ENCODE measurements at regions of chr2 and their contacts with region 1.

Region 1: DNA sequence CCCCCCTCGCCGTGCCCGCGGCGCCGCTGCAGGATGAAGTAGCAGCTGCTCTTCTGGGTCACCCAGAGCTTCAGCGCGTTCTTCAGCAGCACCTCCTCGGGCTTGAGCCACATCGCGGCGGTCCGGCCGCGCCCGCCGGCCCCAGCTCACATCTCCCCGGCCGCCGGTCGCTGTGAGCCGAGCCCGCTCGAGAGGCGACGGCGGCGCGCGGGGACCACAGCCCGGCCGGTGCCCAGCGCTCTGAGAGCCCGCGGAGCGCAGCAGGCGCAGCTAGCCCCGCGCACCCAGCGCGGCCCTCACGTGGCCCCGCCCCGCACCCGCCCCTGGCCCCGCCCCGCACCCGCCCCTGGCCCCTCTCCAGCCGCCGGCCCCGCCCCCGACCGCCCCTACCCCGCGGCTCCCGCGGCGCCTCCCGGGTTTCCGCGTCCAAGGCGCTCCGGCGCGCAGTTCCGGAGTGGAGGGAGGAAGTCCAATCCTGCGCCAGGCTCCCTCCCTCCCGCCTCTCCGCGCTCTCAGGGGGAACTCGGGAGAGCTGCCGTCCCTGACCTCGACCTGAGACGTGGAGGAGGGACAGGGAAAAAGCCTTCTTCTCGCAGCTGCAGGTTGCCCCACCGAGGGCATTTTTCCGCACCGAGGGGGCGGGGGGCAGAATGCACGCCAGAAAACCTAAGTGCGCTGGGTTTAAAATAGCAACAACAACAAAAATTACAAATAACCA is at the start of gene TBC1D8:
- DNase-seq: peak; percentile 89 to 97 (median 94)
- ATAC-seq: peak; percentile 83 to 86 (median 84)
- H3K4me3 ChIP-seq: peak within 1 kb of the TSS; percentile 77 to 93 (median 86)
- H3K27ac ChIP-seq: peak within 1 kb of the TSS; percentile 72 to 88 (median 80)
- H3K4me1 ChIP-seq: peaks cover 16 to 37% (median 33%) of the 10 kb centered on the region in 3 donors
- H3K27me3 ChIP-seq: no peaks in the 10 kb centered on the region
- CTCF ChIP-seq: no peak
- total RNA-seq, gene TBC1D8: 21.3 to 43.2 (median 31.1) TPM

Region 2: DNA sequence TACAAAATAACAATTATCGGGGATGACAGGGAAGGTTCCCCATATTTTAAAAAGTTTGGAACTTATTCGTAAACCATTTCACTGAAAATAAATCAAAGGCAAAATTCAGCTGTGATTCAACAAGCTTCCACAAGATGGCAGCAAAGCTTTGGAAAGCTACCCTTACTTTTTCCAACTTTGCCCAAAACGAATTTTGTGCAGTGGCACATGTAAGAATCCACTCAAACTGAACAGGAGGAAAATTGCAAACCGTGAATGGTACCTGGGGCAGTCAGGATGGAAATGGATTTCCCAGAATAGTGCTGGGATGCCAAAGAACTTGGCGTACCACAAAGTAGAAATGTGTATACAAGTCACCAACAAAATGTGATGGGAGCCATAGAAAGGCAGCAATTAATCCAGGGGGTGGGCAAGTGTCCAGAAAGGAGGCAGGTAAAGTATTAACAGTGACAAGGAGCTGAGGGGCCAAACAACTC is 138.6 kb before region 1 on chr2:
- intact Hi-C with region 1: loop called in 1 of 3 experiments (anchors 5 kb)
- DNase-seq: peak in 1 of 6 donors; percentile 55
- ATAC-seq: peak; percentile 26 to 76 (median 62)
- H3K4me3 ChIP-seq: no peak overlapping the region
- H3K27ac ChIP-seq: no peak overlapping the region
- H3K4me1 ChIP-seq: no peaks in the 10 kb centered on the region
- H3K27me3 ChIP-seq: no peaks in the 10 kb centered on the region
- CTCF ChIP-seq: peak; percentile 45 to 77 (median 68)

Region 3: GRCh38 chr2:101022221-101022620 is 129.1 kb before region 1 on chr2:
- intact Hi-C with region 1: loop called in 1 of 3 experiments (anchors 5 kb)
- DNase-seq: no peak
- ATAC-seq: no peak
- H3K4me3 ChIP-seq: no peak overlapping the region
- H3K27ac ChIP-seq: no peak overlapping the region
- H3K4me1 ChIP-seq: no peaks in the 10 kb centered on the region
- H3K27me3 ChIP-seq: no peaks in the 10 kb centered on the region
- CTCF ChIP-seq: no peak

Region 4: DNA sequence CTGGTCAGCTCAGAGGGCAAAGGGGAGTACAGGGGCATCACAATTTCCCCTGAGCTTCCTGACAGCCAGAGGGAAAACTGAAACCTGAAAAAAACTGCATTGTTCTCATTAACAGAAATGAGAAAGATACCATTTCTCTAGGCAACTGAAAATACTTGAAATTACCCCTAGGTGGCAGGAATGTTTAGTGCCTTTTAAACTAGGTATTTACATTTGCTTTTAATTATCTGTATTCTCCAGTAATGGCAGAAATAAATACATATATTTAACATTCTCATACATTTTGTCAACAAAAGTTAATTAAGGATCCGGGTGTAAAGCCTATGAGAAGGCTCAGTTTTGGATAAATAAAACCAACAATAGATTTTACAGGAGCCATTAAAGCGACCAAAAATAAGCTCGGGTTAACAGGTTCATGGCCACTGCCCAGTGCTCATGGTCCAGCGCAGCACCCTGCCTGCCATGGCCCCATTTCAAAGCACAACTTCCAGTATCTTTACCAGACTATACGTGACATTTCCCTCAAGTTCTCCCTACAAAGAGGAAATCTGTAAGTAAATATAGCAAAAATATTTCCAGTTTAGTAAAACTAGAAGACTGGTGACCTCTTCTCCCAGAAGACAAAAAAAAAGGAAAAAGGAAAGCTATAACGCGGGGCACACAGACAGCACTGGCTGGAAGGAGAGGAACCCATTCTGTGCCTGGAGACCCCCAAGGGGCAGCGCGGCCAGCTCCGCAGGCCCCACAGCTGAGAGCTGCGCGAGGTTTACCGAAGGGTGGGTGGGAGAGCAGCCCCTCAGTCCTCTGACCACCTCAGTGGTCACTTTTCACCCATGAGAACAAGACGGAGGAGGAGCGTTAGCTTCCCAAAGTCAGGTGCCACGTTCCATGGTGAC is 114.5 kb before region 1 on chr2:
- intact Hi-C with region 1: loop called in 2 of 3 experiments (anchors 5 to 10 kb)
- DNase-seq: no peak
- ATAC-seq: peak in 1 of 4 donors; percentile 45
- H3K4me3 ChIP-seq: no peak overlapping the region
- H3K27ac ChIP-seq: no peak overlapping the region
- H3K4me1 ChIP-seq: no peaks in the 10 kb centered on the region
- H3K27me3 ChIP-seq: no peaks in the 10 kb centered on the region
- CTCF ChIP-seq: peak in 3 of 4 donors; percentile 17 to 30 (median 19)

Region 5: DNA sequence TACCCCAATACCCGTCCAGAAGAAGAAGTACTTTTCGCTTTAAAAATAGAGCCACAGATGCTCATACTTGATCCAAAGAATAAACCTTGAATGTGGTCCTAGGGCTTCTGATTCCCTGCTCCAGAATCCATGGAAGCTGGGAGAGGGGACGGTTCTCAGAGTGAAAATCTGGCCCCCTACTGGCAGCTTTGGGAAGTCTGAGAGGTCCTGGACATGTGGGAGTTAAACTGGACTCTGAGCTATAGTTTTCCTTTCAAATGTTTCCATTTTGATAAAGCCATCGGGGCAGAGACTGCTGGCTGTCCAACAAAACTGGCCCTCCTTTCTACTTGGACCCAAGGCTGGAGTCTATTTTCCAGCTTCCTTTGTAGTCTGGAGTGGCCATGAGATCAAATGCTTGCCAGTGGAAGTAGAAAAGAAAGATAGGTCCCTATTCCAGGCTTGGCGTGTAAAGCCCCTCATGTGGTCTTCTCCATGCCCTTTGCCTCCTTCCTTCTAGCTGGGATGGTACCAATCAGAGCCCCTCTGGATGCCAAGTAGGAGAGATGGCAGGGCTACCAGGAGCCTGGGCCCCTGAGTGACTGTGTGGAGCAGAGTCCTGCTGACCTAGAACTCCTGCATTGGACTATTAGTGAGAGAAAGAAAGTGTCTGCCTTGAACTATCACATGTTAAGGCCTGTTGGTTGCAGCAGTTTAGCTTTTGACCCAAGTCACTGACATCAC is 37.5 kb after region 1 on chr2:
- intact Hi-C with region 1: no loop called
- DNase-seq: peak in 1 of 6 donors; percentile 37
- ATAC-seq: peak in 2 of 4 donors; percentile 31 to 49
- H3K4me3 ChIP-seq: no peak overlapping the region
- H3K27ac ChIP-seq: no peak overlapping the region
- H3K4me1 ChIP-seq: peaks cover 0 to 14% (median 3%) of the 10 kb centered on the region in 3 donors
- H3K27me3 ChIP-seq: no peaks in the 10 kb centered on the region
- CTCF ChIP-seq: peak in 3 of 4 donors; percentile 9 to 23 (median 22)

Region 6: DNA sequence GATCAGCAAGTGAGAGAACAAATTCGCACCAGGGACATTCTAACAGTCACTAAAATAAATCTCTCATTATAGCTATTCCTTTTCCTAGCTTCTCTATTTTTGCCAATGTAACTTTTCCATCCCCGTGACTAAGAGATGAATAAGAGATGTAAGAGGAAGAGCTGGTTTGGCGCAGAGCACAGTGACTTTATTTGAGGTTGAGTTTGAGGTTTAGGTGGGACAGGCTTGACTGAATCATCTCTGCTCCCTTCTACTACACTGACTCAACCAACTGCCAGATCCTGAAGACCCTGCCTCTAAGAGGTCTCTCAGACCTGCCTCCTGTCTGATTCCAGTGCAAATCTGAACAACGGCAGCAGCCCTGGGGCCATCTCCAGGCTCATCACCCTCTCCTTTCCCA is 295.6 kb after region 1 on chr2:
- intact Hi-C with region 1: no loop called
- DNase-seq: no peak
- ATAC-seq: peak in 1 of 4 donors; percentile 16
- H3K4me3 ChIP-seq: no peak overlapping the region
- H3K27ac ChIP-seq: no peak overlapping the region
- H3K4me1 ChIP-seq: no peaks in the 10 kb centered on the region
- H3K27me3 ChIP-seq: no peaks in the 10 kb centered on the region
- CTCF ChIP-seq: no peak